ENCODE measurements at regions of chr14 and their contacts with region 1.

Region 1: GRCh38 chr14:71452987-71453386 is 479.2 kb upstream of the RGS6 start:
- DNase-seq: no peak
- ATAC-seq: peak; percentile 36
- H3K4me3 ChIP-seq: no peak overlapping the region
- H3K27ac ChIP-seq: no peak overlapping the region
- H3K4me1 ChIP-seq: no peaks in the 10 kb centered on the region
- H3K27me3 ChIP-seq: no peaks in the 10 kb centered on the region
- CTCF ChIP-seq: no peak
- EP300 ChIP-seq: no peak
- POLR2A ChIP-seq: no peak
- RAD21 ChIP-seq: no peak

Region 2: GRCh38 chr14:71438684-71439083 is 14.3 kb before region 1 on chr14:
- CTCF ChIA-PET with region 1: interaction called, 4 read pairs
- POLR2A ChIA-PET with region 1: interaction called, 8 read pairs
- RAD21 ChIA-PET with region 1: interaction called, 10 read pairs
- SMC1A ChIA-PET with region 1: interaction called, 63 read pairs
- in situ Hi-C with region 1: no loop called
- intact Hi-C with region 1: no loop called
- DNase-seq: no peak
- ATAC-seq: no peak
- H3K4me3 ChIP-seq: no peak overlapping the region
- H3K27ac ChIP-seq: no peak overlapping the region
- H3K4me1 ChIP-seq: peaks cover 16% of the 10 kb centered on the region
- H3K27me3 ChIP-seq: no peaks in the 10 kb centered on the region
- CTCF ChIP-seq: no peak
- EP300 ChIP-seq: no peak
- POLR2A ChIP-seq: no peak
- RAD21 ChIP-seq: no peak

Region 3: GRCh38 chr14:71465316-71465715 is 12.3 kb after region 1 on chr14:
- CTCF ChIA-PET with region 1: interaction called, 4 read pairs
- POLR2A ChIA-PET with region 1: interaction called, 6 read pairs
- RAD21 ChIA-PET with region 1: interaction called, 6 read pairs
- SMC1A ChIA-PET with region 1: interaction called, 12 read pairs
- in situ Hi-C with region 1: no loop called
- intact Hi-C with region 1: no loop called
- DNase-seq: no peak
- ATAC-seq: no peak
- H3K4me3 ChIP-seq: no peak overlapping the region
- H3K27ac ChIP-seq: no peak overlapping the region
- H3K4me1 ChIP-seq: peaks cover 6% of the 10 kb centered on the region; the same call in 1 of the 2 replicates
- H3K27me3 ChIP-seq: no peaks in the 10 kb centered on the region
- CTCF ChIP-seq: no peak
- EP300 ChIP-seq: no peak
- POLR2A ChIP-seq: no peak
- RAD21 ChIP-seq: no peak